Activated CD8-positive, alpha-beta T cell treated with anti-CD3 and anti-CD28 coated beads for 36 hours (primary cell): ENCODE measurements at regions of chr17 and their contacts with region 1.

Region 1: DNA sequence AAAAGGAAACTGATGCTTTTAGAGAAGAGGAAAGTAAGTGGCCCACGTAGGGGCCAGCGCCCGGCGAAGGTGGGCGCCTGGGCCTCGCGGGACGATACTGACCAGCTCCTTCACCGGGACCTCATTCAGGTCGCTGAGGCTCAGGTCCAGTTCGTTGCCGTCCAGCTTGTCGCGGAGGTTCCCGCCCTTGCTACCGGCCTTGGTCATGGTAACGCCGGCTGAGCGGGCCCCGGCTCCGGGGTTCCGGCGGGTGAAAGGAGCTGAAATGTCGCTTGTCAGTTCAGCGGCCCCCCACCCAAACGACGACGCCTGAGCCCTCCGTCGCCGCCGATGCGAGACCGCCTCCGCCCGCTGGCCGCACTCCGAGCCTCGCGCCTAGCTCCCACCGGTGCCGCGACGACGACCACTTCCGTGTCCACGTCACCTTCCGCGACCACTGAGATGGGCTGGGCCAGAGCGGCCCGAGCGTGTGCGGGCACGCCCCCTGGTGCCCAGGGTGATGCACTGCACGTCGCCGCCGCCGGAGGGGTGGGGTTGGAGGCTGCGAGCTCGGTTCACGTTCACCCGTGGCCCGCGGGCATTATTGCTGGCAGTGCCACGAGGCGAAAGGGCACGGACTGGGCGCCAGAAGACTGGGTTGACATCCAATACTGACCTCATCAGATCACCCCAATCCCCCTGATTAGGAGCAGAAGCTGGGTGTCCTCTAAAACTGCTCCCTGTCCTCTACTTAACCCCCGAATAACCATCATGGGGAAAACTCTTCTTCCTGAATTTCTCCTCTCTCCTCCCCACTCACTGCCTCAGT is at the start of gene LRRC59:
- DNase-seq: peak; percentile 93
- ATAC-seq: peak; percentile 100
- H3K4me3 Mint-ChIP-seq: peak within 1 kb of the TSS; percentile 89
- H3K27ac Mint-ChIP-seq: peak within 1 kb of the TSS; percentile 90
- H3K4me1 Mint-ChIP-seq: peaks cover 30% of the 10 kb centered on the region
- H3K27me3 Mint-ChIP-seq: no peaks in the 10 kb centered on the region
- CTCF ChIP-seq: peak; percentile 97
- total RNA-seq, gene LRRC59: 70.6 to 71.0 TPM

Region 2: GRCh38 chr17:50114849-50115357 is 282.4 kb before region 1 on chr17:
- CTCF ChIA-PET with region 1: no interaction called
- POLR2A ChIA-PET with region 1: no interaction called
- intact Hi-C with region 1: no loop called
- DNase-seq: peak; percentile 75
- ATAC-seq: peak; percentile 69
- H3K4me3 Mint-ChIP-seq: no peak overlapping the region
- H3K27ac Mint-ChIP-seq: no peak overlapping the region
- H3K4me1 Mint-ChIP-seq: peaks cover 12% of the 10 kb centered on the region
- H3K27me3 Mint-ChIP-seq: peaks cover 29% of the 10 kb centered on the region
- CTCF ChIP-seq: peak; percentile 63

Region 3: DNA sequence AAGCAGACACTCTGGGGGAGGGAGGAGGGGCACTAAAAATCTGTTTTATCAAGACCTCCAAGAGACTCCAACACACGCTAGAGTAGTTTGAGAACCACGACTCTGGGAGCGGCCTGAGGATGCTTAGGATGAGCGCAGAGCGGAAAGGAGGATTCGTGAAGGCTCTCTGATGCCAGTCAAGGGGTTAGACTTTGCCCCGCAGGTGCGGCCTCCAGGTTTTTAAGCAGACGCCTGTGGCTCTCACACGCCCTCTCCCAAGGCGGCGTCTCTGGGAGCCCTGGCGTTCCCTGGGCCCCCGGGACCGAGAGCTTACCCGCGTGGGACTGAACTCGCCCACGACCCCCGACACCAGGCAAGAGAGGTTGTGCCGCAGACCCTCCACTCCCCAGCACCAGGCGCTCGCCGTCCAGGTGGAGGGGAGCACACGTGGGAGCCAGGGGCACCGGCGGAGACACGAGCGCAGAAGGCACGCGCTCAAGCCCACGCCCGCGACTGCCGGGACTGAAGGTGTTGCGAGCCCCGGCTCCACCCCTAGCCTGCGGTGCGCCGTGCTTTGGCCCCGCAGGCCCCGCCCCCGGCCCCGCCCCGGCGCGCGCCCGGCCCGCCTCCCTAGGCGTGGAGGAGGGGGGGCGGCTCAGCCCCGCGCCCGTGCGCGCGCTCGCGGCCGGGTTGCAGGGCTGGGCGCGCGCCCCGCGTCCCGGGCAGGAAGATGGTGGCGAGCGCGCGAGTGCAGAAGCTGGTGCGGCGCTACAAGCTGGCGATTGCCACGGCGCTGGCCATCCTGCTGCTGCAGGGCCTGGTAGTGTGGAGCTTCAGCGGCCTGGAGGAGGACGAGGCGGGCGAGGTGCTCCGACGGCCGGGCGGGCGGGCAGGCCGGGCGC is 51.6 kb before region 1 on chr17 and contains the start of gene XYLT2:
- CTCF ChIA-PET with region 1: interaction called, 8 read pairs
- POLR2A ChIA-PET with region 1: interaction called, 11 read pairs
- intact Hi-C with region 1: no loop called
- DNase-seq: peak; percentile 91
- ATAC-seq: peak; percentile 93
- H3K4me3 Mint-ChIP-seq: peak within 1 kb of the TSS; percentile 91
- H3K27ac Mint-ChIP-seq: peak within 1 kb of the TSS; percentile 93
- H3K4me1 Mint-ChIP-seq: peaks cover 33% of the 10 kb centered on the region
- H3K27me3 Mint-ChIP-seq: no peaks in the 10 kb centered on the region
- CTCF ChIP-seq: no peak
- total RNA-seq, gene XYLT2: 24.4 to 25.3 TPM

Region 4: GRCh38 chr17:50372758-50373556 is 24.4 kb before region 1 on chr17 and contains the starts of genes EME1 and MRPL27:
- CTCF ChIA-PET with region 1: interaction called, 38 read pairs
- POLR2A ChIA-PET with region 1: interaction called, 16 read pairs
- intact Hi-C with region 1: no loop called
- DNase-seq: peak; percentile 91
- ATAC-seq: peak; percentile 95
- H3K4me3 Mint-ChIP-seq: peak within 1 kb of the TSS; percentile 94
- H3K27ac Mint-ChIP-seq: peak within 1 kb of the TSS; percentile 98
- H3K4me1 Mint-ChIP-seq: peaks cover 21% of the 10 kb centered on the region
- H3K27me3 Mint-ChIP-seq: no peaks in the 10 kb centered on the region
- CTCF ChIP-seq: no peak
- total RNA-seq, gene EME1: 48.0 to 48.6 TPM
- total RNA-seq, gene MRPL27: 54.6 to 55.8 TPM

Region 5: GRCh38 chr17:50386510-50386909 is 10.8 kb before region 1 on chr17:
- CTCF ChIA-PET with region 1: interaction called, 22 read pairs
- POLR2A ChIA-PET with region 1: interaction called, 22 read pairs
- intact Hi-C with region 1: no loop called
- DNase-seq: no peak
- ATAC-seq: no peak
- H3K4me3 Mint-ChIP-seq: no peak overlapping the region
- H3K27ac Mint-ChIP-seq: no peak overlapping the region
- H3K4me1 Mint-ChIP-seq: no peaks in the 10 kb centered on the region
- H3K27me3 Mint-ChIP-seq: no peaks in the 10 kb centered on the region
- CTCF ChIP-seq: no peak

Region 6: GRCh38 chr17:50471009-50471905 is 73.9 kb after region 1 on chr17:
- CTCF ChIA-PET with region 1: interaction called, 14 read pairs
- POLR2A ChIA-PET with region 1: no interaction called
- intact Hi-C with region 1: no loop called
- DNase-seq: no peak
- ATAC-seq: peak; percentile 30
- H3K4me3 Mint-ChIP-seq: no peak overlapping the region
- H3K27ac Mint-ChIP-seq: no peak overlapping the region
- H3K4me1 Mint-ChIP-seq: peaks cover 4% of the 10 kb centered on the region
- H3K27me3 Mint-ChIP-seq: peaks cover 16% of the 10 kb centered on the region
- CTCF ChIP-seq: no peak